Activated B cell treated with CpG ODN at 0.5 μM for 24 hours (primary cell): ENCODE measurements at regions of chr11 and their contacts with region 1.

Region 1: DNA sequence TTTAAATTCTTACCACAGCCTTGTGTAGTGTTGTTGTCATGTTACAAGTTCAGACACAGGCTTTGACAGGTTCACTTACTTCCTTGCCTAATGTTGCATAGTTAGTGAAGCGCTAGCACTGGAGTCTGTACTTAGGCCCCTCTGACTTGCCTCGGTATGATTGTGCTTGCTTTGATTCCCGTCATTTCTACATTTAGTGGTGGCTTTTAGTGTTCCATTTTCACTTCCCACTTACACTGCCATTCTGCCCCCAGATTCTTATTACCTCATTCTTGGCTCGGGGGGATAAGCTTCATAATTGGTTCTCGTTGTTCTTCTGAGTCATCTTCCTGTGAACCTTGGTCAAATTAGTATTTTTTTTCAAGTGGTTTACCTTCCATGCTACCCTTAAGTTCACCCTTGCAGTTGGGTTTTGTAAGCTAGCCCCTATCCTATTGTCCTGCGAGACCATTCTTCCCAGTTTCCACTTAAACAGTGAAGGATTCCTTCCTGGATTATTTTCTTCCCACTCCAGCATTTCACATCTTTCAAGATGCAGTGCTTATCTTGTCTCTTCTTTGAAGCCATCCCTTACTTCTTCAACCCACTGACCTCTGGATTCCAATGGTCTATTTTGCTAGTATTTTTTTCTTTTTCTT is 68.7 kb downstream of the DDX10 start:
- DNase-seq: no peak
- ATAC-seq: peak; percentile 92
- H3K4me3 Mint-ChIP-seq: peak overlapping the region; percentile 8
- H3K27ac Mint-ChIP-seq: peak overlapping the region; percentile 62
- H3K4me1 Mint-ChIP-seq: peaks cover 37% of the 10 kb centered on the region
- H3K27me3 Mint-ChIP-seq: no peaks in the 10 kb centered on the region
- CTCF ChIP-seq: no peak

Region 2: GRCh38 chr11:108206969-108207682 is 526.5 kb before region 1 on chr11:
- CTCF ChIA-PET with region 1: no interaction called
- POLR2A ChIA-PET with region 1: no interaction called
- intact Hi-C with region 1: no loop called
- DNase-seq: no peak
- ATAC-seq: no peak
- H3K4me3 Mint-ChIP-seq: no peak overlapping the region
- H3K27ac Mint-ChIP-seq: no peak overlapping the region
- H3K4me1 Mint-ChIP-seq: peaks cover 22% of the 10 kb centered on the region
- H3K27me3 Mint-ChIP-seq: no peaks in the 10 kb centered on the region
- CTCF ChIP-seq: no peak

Region 3: DNA sequence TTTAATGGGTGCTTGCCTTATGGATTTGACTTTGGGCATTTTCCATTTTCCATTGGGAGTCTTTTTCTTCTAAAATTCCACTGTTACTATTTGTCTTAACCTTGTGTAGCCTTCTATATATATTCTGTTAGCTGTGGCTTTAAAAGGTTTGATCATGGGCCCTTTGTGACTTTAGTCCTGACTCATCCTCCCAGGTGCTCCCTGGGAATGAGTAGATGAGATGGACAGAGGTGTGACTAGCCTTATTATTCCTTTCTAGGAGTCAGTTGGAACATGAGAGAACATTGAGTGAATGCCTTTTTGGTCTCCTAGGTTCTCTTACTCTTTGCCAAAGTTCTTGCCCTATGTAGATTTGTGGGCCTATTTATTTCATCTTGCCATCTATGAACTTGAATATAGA is 29.7 kb before region 1 on chr11:
- CTCF ChIA-PET with region 1: no interaction called
- POLR2A ChIA-PET with region 1: no interaction called
- intact Hi-C with region 1: no loop called
- DNase-seq: no peak
- ATAC-seq: no peak
- H3K4me3 Mint-ChIP-seq: no peak overlapping the region
- H3K27ac Mint-ChIP-seq: no peak overlapping the region
- H3K4me1 Mint-ChIP-seq: no peaks in the 10 kb centered on the region
- H3K27me3 Mint-ChIP-seq: no peaks in the 10 kb centered on the region
- CTCF ChIP-seq: no peak

Region 4: GRCh38 chr11:108718466-108718865 is 15.1 kb before region 1 on chr11:
- CTCF ChIA-PET with region 1: interaction called, 3 read pairs
- POLR2A ChIA-PET with region 1: no interaction called
- intact Hi-C with region 1: loop called (anchors 2 kb)
- DNase-seq: no peak
- ATAC-seq: no peak
- H3K4me3 Mint-ChIP-seq: no peak overlapping the region
- H3K27ac Mint-ChIP-seq: no peak overlapping the region
- H3K4me1 Mint-ChIP-seq: peaks cover 4% of the 10 kb centered on the region
- H3K27me3 Mint-ChIP-seq: no peaks in the 10 kb centered on the region
- CTCF ChIP-seq: no peak

Region 5: DNA sequence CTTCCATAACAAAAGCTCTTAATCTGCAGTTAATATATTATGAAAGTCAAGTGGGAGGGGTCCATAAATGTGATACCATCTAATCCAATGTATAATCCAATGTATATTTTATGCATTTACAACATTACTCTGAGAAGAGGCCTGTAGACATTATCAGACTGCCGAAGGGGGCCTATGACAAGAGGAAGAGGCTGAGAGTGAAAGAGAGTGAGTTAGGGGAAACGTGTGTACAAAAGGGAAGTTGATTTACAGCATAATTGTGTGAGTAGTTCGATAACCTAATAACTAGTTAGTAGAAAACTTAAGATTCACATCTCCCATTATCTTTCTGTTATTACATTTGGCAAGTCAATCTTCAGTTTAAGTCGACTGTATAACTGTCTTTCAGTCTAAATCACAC is 17.8 kb after region 1 on chr11:
- CTCF ChIA-PET with region 1: interaction called, 6 read pairs
- POLR2A ChIA-PET with region 1: no interaction called
- intact Hi-C with region 1: loop called (anchors 1 kb)
- DNase-seq: no peak
- ATAC-seq: no peak
- H3K4me3 Mint-ChIP-seq: no peak overlapping the region
- H3K27ac Mint-ChIP-seq: peak overlapping the region; percentile 36
- H3K4me1 Mint-ChIP-seq: peaks cover 39% of the 10 kb centered on the region
- H3K27me3 Mint-ChIP-seq: no peaks in the 10 kb centered on the region
- CTCF ChIP-seq: no peak